ENCODE measurements at regions of chr1 and their contacts with region 1.

Region 1: GRCh38 chr1:204746838-204747442 is 61.4 kb upstream of the LRRN2 start:
- H3K4me3 ChIP-seq: no peak overlapping the region
- H3K27ac ChIP-seq: no peak overlapping the region
- H3K4me1 ChIP-seq: no peaks in the 10 kb centered on the region
- CTCF ChIP-seq: peak; percentile 45; the same call in 1 of the 2 replicates

Region 2: DNA sequence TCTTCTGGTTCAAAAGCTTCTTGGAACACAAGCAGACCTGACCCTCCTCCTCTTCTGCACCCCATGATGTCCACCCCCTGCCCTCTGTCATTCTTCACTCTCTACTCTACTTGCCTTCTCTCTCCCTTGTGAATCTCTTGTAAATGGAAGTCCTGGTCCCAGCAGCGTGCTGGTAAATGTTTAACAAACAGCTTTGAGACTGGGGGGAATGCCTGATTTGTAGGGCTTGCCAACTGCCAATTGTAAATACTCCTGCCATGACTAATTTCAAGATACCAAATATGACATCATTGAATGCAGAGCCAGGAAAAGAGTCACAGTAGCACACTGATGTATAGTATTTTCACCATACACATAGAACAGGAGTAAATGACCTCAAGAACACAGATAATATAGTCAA is 20.5 kb before region 1 on chr1:
- CTCF ChIA-PET with region 1: interaction called, 15 read pairs
- POLR2A ChIA-PET with region 1: no interaction called
- H3K4me3 ChIP-seq: no peak overlapping the region
- H3K27ac ChIP-seq: no peak overlapping the region
- H3K4me1 ChIP-seq: peaks cover 2% of the 10 kb centered on the region
- CTCF ChIP-seq: no peak

Region 3: GRCh38 chr1:204736836-204737387 is 10.0 kb before region 1 on chr1:
- CTCF ChIA-PET with region 1: interaction called, 15 read pairs
- POLR2A ChIA-PET with region 1: no interaction called
- H3K4me3 ChIP-seq: no peak overlapping the region
- H3K27ac ChIP-seq: no peak overlapping the region
- H3K4me1 ChIP-seq: no peaks in the 10 kb centered on the region
- CTCF ChIP-seq: no peak